ENCODE measurements at regions of chr5 and their contacts with region 1.

Region 1: GRCh38 chr5:145697251-145697990 is 137.7 kb downstream of the PRELID2 start:
- DNase-seq: peak; percentile 47
- ATAC-seq: peak; percentile 80
- H3K4me3 ChIP-seq: no peak overlapping the region
- H3K27ac ChIP-seq: no peak overlapping the region
- H3K4me1 ChIP-seq: no peaks in the 10 kb centered on the region
- H3K27me3 ChIP-seq: no peaks in the 10 kb centered on the region
- CTCF ChIP-seq: peak; percentile 63
- EP300 ChIP-seq: no peak
- POLR2A ChIP-seq: no peak
- RAD21 ChIP-seq: no peak

Region 2: DNA sequence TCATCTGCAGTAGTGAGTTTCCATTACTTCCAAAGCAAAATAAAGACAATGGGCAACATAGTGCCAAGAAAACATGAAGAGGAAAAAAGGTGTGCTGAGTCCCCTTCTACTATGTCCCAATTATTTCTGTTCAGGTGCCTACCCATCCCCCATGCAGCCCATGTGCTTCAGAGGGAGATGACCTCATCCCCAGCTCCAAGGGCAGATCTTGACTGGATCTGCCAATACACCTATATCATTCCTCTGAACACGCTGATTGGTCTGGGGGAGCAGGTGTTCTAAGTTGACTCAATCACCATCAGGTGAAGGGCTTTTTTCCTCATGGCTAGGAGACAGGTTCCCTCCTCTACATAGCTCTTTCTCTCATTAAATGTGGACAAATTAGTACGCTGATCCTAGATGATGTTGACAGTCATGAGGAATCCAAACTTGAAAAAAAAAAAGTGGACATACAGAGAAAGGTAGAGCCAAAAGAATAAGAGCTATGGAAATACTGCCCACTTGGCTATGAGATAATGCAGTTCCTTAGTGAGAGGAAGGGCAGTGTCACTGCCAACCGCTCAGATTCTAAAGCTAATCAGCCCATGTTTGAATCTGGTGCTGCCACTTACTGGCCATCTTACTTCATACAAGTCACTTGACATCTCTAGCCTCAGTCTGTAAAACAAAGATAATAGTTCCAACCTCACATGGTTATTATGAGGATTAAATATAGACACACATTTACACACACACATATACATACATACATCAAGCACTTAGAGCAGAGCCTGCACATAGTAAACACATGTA is 114.6 kb after region 1 on chr5:
- CTCF ChIA-PET with region 1: no interaction called
- POLR2A ChIA-PET with region 1: no interaction called
- in situ Hi-C with region 1: no loop called
- intact Hi-C with region 1: loop called (anchors 5 kb)
- DNase-seq: peak; percentile 6
- ATAC-seq: peak; percentile 57
- H3K4me3 ChIP-seq: no peak overlapping the region
- H3K27ac ChIP-seq: no peak overlapping the region
- H3K4me1 ChIP-seq: no peaks in the 10 kb centered on the region
- H3K27me3 ChIP-seq: no peaks in the 10 kb centered on the region
- CTCF ChIP-seq: peak; percentile 29; the same call in 1 of the 2 replicates
- EP300 ChIP-seq: no peak
- POLR2A ChIP-seq: no peak
- RAD21 ChIP-seq: no peak

Region 3: GRCh38 chr5:145825751-145826180 is 128.3 kb after region 1 on chr5:
- CTCF ChIA-PET with region 1: interaction called, 22 read pairs
- POLR2A ChIA-PET with region 1: no interaction called
- in situ Hi-C with region 1: loop called (anchors 5 kb)
- intact Hi-C with region 1: loop called (anchors 1 kb)
- DNase-seq: peak; percentile 61
- ATAC-seq: peak; percentile 66
- H3K4me3 ChIP-seq: no peak overlapping the region
- H3K27ac ChIP-seq: no peak overlapping the region
- H3K4me1 ChIP-seq: peaks cover 25% of the 10 kb centered on the region
- H3K27me3 ChIP-seq: no peaks in the 10 kb centered on the region
- CTCF ChIP-seq: peak; percentile 72
- EP300 ChIP-seq: no peak
- POLR2A ChIP-seq: no peak
- RAD21 ChIP-seq: peak; percentile 33; the same call in 1 of the 2 replicates

Region 4: GRCh38 chr5:146049014-146049703 is 351.7 kb after region 1 on chr5:
- CTCF ChIA-PET with region 1: interaction called, 7 read pairs
- POLR2A ChIA-PET with region 1: no interaction called
- in situ Hi-C with region 1: no loop called
- intact Hi-C with region 1: loop called (anchors 1 kb)
- DNase-seq: peak; percentile 66
- ATAC-seq: peak; percentile 92
- H3K4me3 ChIP-seq: no peak overlapping the region
- H3K27ac ChIP-seq: no peak overlapping the region
- H3K4me1 ChIP-seq: no peaks in the 10 kb centered on the region
- H3K27me3 ChIP-seq: no peaks in the 10 kb centered on the region
- CTCF ChIP-seq: peak; percentile 83
- EP300 ChIP-seq: no peak
- POLR2A ChIP-seq: no peak
- RAD21 ChIP-seq: peak; percentile 84